PC-3 (cell line): ENCODE measurements at regions of chr7 and their contacts with region 1.

Region 1: GRCh38 chr7:105336009-105336408 is 52.7 kb downstream of the SRPK2 start:
- DNase-seq: peak; percentile 47
- ATAC-seq: no peak
- H3K4me3 ChIP-seq: no peak overlapping the region
- H3K27ac ChIP-seq: no peak overlapping the region
- H3K4me1 ChIP-seq: peaks cover 7% of the 10 kb centered on the region; the same call in 1 of the 2 replicates
- H3K27me3 ChIP-seq: no peaks in the 10 kb centered on the region
- CTCF ChIP-seq: peak; percentile 57; the same call in 1 of the 2 replicates

Region 2: GRCh38 chr7:105118612-105119600 is 217.1 kb before region 1 on chr7:
- CTCF ChIA-PET with region 1: no interaction called
- POLR2A ChIA-PET with region 1: no interaction called
- intact Hi-C with region 1: loop called (anchors 5 kb)
- DNase-seq: no peak
- ATAC-seq: peak; percentile 27; the same call in 1 of the 2 replicates
- H3K4me3 ChIP-seq: no peak overlapping the region
- H3K27ac ChIP-seq: no peak overlapping the region
- H3K4me1 ChIP-seq: no peaks in the 10 kb centered on the region
- H3K27me3 ChIP-seq: no peaks in the 10 kb centered on the region
- CTCF ChIP-seq: no peak

Region 3: GRCh38 chr7:105141068-105141467 is 194.9 kb before region 1 on chr7:
- CTCF ChIA-PET with region 1: interaction called, 6 read pairs
- POLR2A ChIA-PET with region 1: no interaction called
- intact Hi-C with region 1: loop called (anchors 2 kb)
- DNase-seq: peak; percentile 27
- ATAC-seq: peak; percentile 50; the same call in 1 of the 2 replicates
- H3K4me3 ChIP-seq: no peak overlapping the region
- H3K27ac ChIP-seq: no peak overlapping the region
- H3K4me1 ChIP-seq: peaks cover 9% of the 10 kb centered on the region
- H3K27me3 ChIP-seq: no peaks in the 10 kb centered on the region
- CTCF ChIP-seq: peak; percentile 59; the same call in 1 of the 2 replicates

Region 4: GRCh38 chr7:105388373-105389087 is 52.5 kb after region 1 on chr7 and contains the start of gene SRPK2:
- CTCF ChIA-PET with region 1: no interaction called
- POLR2A ChIA-PET with region 1: no interaction called
- intact Hi-C with region 1: no loop called
- DNase-seq: peak; percentile 59
- ATAC-seq: peak; percentile 80
- H3K4me3 ChIP-seq: peak within 1 kb of the TSS; percentile 94
- H3K27ac ChIP-seq: no peak within 1 kb of the TSS
- H3K4me1 ChIP-seq: peaks cover 8% of the 10 kb centered on the region; the same call in 1 of the 2 replicates
- H3K27me3 ChIP-seq: no peaks in the 10 kb centered on the region
- CTCF ChIP-seq: no peak
- total RNA-seq, gene SRPK2: 21.6 and 32.1 TPM in 2 replicates

Region 5: DNA sequence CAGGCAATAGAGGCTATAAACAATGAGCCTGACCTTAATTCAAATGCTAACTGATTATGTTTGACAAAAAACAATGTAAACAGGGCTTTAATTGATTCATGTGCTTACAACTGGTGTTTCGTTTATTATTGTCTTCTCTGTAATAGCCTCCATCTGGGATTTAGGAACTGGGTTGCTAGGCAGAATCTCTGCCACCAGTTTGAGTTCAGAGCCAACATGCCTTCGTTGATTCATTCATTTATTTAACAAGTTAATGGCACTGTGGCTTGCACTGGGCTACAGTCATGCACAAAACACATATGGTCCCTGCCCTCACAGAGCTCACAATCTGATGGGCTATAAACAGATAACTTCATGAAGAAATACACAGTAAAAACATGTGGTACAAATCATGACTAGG is 607.5 kb after region 1 on chr7:
- CTCF ChIA-PET with region 1: no interaction called
- POLR2A ChIA-PET with region 1: no interaction called
- intact Hi-C with region 1: no loop called
- DNase-seq: no peak
- ATAC-seq: no peak
- H3K4me3 ChIP-seq: no peak overlapping the region
- H3K27ac ChIP-seq: no peak overlapping the region
- H3K4me1 ChIP-seq: no peaks in the 10 kb centered on the region
- H3K27me3 ChIP-seq: no peaks in the 10 kb centered on the region
- CTCF ChIP-seq: no peak